Left cardiac atrium (tissue), 4 donors: ENCODE measurements at regions of chr1 and their contacts with region 1.

Region 1: GRCh38 chr1:225597926-225598575 is 54.9 kb downstream of the ENAH start:
- DNase-seq: no peak
- ATAC-seq: no peak

Region 2: GRCh38 chr1:225642177-225642576 is 44.1 kb after region 1 on chr1:
- intact Hi-C with region 1: loop called in 1 of 2 experiments (anchors 10 kb)
- DNase-seq: no peak
- ATAC-seq: no peak

Region 3: GRCh38 chr1:225780630-225781029 is 182.6 kb after region 1 on chr1:
- intact Hi-C with region 1: no loop called
- DNase-seq: no peak
- ATAC-seq: no peak